Motor neuron (in vitro differentiated cells): ENCODE measurements at regions of chr14 and their contacts with region 1.

Region 1: GRCh38 chr14:45284802-45285201 is 31.8 kb upstream of the MIS18BP1 start:
- ATAC-seq: no peak
- H3K4me3 ChIP-seq: no peak overlapping the region
- H3K27ac ChIP-seq: no peak overlapping the region
- H3K4me1 ChIP-seq: peaks cover 0 to 2% of the 10 kb centered on the region in 2 donors

Region 2: GRCh38 chr14:44945264-44945663 is 339.5 kb before region 1 on chr14:
- in situ Hi-C with region 1: no loop called
- ATAC-seq: peak in 3 of 8 experiments; percentile 41 to 68 (median 61)
- H3K4me3 ChIP-seq: no peak overlapping the region
- H3K27ac ChIP-seq: no peak overlapping the region
- H3K4me1 ChIP-seq: no peaks in the 10 kb centered on the region

Region 3: DNA sequence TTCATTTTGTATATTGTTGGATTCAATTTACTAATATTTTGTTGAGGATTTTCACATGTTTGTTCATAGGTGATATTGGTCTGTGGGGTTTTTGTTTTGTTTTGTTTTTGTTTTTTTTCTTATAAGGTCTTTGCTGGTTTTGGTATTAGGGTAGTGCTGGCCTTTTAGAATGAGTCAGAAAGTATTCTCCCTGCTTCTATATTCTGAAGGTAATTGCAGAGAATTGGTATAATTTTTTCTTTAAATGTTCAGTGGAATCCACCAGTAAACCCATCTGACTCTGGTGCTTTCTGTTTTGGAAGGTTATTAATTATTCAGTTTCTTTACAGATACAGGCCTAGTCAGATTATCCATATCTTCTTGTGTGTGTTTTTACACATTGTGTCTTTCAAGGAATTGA is 313.9 kb before region 1 on chr14:
- in situ Hi-C with region 1: no loop called
- ATAC-seq: no peak
- H3K4me3 ChIP-seq: no peak overlapping the region
- H3K27ac ChIP-seq: no peak overlapping the region
- H3K4me1 ChIP-seq: peaks cover 5 to 18% of the 10 kb centered on the region in 2 donors

Region 4: DNA sequence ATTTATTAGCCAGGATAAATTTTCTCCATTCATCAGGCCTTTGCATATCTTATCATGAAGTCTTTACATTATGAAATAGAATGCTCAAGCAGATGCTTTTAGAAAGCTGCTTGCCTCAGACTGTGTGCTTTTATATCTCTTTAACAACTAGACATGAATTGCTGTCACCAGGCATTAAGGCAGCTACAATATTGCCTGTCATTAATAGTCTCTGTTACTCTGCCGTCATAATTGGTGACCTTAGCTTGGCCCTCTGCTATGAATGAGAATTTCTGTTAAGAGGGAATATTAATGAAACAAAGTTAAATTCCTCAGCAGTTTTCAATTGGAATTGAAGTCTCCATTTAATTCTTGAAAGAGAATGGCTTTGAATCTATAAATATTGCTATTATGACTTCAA is 235.0 kb after region 1 on chr14:
- in situ Hi-C with region 1: loop called in 1 of 9 experiments (anchors 25 kb)
- ATAC-seq: peak in 4 of 8 experiments; percentile 37 to 77 (median 52)
- H3K4me3 ChIP-seq: no peak overlapping the region
- H3K27ac ChIP-seq: no peak overlapping the region
- H3K4me1 ChIP-seq: peaks cover 0 to 6% of the 10 kb centered on the region in 2 donors

Region 5: GRCh38 chr14:45877981-45878380 is 593.2 kb after region 1 on chr14:
- in situ Hi-C with region 1: no loop called
- ATAC-seq: no peak
- H3K4me3 ChIP-seq: no peak overlapping the region
- H3K27ac ChIP-seq: no peak overlapping the region
- H3K4me1 ChIP-seq: no peaks in the 10 kb centered on the region